ENCODE measurements at regions of chr4 and their contacts with region 1.

Region 1: DNA sequence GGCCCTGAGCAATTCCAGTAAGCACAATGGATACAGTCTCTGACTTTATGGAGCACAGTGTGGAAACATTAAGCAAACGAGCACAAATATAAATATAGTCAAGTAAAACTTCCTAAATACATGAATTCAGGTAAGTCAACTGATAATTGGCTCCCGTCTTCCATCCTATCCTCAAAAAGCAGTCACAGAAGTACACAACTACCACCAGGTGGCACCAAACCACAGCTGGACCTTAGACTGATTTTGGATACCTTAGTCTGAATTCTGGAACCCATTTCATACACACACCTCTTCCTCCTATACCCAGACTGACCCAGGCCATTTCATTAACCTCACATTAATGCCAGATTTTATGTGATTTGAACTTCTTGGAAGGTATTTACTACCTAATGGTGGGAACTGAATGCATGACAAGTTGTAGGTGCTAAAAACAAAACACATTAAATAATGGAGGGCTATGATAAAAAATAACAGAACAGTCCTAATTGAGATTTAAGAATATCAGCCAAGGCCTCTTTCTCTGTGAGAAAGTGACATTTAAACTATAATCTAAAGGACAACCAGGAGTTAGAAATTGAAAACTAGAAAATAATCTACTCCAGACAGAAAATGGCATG is 77.5 kb downstream of the ELF2 start:
- DNase-seq: peak; percentile 37 to 81 (median 71)
- ATAC-seq: peak; percentile 94
- H3K4me3 ChIP-seq: no peak overlapping the region
- H3K4me3 Mint-ChIP-seq: no peak overlapping the region
- H3K27ac ChIP-seq: no peak overlapping the region
- H3K27ac Mint-ChIP-seq: no peak overlapping the region
- H3K4me1 ChIP-seq: no peaks in the 10 kb centered on the region
- H3K4me1 Mint-ChIP-seq: peaks cover 0 to 6% (median 0%) of the 10 kb centered on the region in 7 donors
- H3K27me3 ChIP-seq: no peaks in the 10 kb centered on the region
- H3K27me3 Mint-ChIP-seq: no peaks in the 10 kb centered on the region

Region 2: DNA sequence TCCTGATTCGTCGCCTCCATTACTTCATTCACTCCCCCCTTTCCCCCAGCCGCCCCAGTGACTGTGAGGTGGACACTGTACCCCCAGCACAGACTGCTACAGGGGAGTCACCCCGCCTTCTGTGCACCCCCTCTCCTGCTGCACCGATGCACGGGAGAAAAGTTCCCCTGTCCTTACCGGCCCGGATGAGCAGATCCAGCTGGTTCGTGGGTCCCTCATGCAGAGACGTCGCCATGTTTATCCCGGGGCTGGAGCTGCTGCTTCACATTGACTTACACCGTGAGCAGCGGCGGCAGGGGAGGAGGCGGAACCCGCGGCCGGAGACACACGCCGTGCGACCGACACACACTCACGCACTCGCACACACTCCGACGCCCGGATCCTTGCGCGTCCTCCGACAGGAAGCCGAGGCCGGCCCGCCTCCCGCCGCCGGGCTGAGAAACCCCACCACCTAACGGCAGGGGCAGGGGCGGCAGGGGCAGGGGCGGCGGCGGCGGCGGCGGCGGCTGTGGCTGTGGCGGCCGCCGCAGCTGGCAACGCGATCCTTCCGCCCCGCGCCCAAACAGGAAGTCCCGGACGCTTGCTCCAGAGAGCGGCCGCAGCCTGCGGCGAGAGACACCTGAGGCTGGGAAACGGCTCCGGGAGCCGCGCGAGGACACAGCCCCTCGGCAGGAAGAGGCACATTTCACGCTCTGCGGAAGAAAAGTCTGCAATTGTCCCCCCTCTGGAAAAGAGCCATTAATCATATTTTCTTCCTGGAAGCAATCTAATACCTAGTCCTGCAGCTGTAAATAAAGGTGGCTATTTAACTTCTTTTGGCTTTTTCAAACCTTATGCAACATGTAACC is 15.3 kb before region 1 on chr4:
- CTCF ChIA-PET with region 1: interaction called, 5 read pairs
- POLR2A ChIA-PET with region 1: interaction called, 3 read pairs
- intact Hi-C with region 1: loop called in 1 of 2 experiments (anchors 1 kb)
- DNase-seq: peak; percentile 54 to 88 (median 84)
- ATAC-seq: peak; percentile 64
- H3K4me3 ChIP-seq: peak overlapping the region; percentile 99
- H3K4me3 Mint-ChIP-seq: peak overlapping the region; percentile 90 to 100 (median 92)
- H3K27ac ChIP-seq: peak overlapping the region; percentile 96
- H3K27ac Mint-ChIP-seq: peak overlapping the region; percentile 85 to 100 (median 96)
- H3K4me1 ChIP-seq: peaks cover 16 to 27% of the 10 kb centered on the region in 2 donors
- H3K4me1 Mint-ChIP-seq: peaks cover 16 to 49% (median 41%) of the 10 kb centered on the region in 7 donors
- H3K27me3 ChIP-seq: no peaks in the 10 kb centered on the region
- H3K27me3 Mint-ChIP-seq: no peaks in the 10 kb centered on the region

Region 3: DNA sequence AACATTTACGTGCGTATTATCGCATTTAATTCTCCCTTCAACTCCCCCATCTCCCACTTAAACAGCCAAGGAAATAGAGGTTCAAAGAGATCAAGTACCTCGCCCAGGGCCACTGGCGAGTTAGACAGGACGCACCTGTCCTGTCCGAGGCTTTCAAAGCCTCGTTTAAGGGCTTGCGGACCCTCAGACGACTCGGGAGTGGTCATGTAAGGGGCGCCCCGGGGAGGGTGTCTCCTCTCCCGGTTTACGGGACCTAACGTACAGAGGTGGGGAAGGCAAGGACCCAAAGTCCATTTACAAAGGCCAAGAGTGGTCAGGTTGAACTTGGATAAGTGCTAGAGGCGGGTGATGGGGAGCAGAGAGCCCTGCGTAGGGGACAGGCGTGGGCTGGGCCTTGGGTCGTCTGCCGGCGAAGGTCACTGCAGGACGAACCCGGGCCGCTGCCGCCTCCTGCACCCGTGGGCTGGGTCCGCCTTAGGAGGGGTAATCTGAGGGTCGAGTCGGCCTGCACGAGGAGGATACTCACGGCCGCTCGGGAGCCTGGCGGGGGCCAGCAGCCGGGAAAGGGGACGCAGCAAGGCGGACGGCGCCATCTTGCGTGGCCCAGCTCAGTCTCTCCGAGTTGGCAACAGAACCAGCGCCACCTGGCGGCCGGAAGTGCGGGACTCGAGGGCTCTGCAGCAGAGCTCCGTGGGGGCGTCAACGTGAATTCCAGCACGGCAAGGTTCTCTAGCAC is 195.9 kb after region 1 on chr4:
- CTCF ChIA-PET with region 1: interaction called, 42 read pairs
- POLR2A ChIA-PET with region 1: interaction called, 6 read pairs
- intact Hi-C with region 1: loop called (anchors 1 kb)
- DNase-seq: peak; percentile 90 to 99 (median 94)
- ATAC-seq: peak; percentile 99
- H3K4me3 ChIP-seq: peak overlapping the region; percentile 97
- H3K4me3 Mint-ChIP-seq: peak overlapping the region; percentile 86 to 100 (median 96)
- H3K27ac ChIP-seq: peak overlapping the region; percentile 94
- H3K27ac Mint-ChIP-seq: peak overlapping the region; percentile 93 to 100 (median 97)
- H3K4me1 ChIP-seq: peaks cover 13 to 28% of the 10 kb centered on the region in 2 donors
- H3K4me1 Mint-ChIP-seq: peaks cover 2 to 62% (median 40%) of the 10 kb centered on the region in 7 donors
- H3K27me3 ChIP-seq: no peaks in the 10 kb centered on the region
- H3K27me3 Mint-ChIP-seq: no peaks in the 10 kb centered on the region

Region 4: DNA sequence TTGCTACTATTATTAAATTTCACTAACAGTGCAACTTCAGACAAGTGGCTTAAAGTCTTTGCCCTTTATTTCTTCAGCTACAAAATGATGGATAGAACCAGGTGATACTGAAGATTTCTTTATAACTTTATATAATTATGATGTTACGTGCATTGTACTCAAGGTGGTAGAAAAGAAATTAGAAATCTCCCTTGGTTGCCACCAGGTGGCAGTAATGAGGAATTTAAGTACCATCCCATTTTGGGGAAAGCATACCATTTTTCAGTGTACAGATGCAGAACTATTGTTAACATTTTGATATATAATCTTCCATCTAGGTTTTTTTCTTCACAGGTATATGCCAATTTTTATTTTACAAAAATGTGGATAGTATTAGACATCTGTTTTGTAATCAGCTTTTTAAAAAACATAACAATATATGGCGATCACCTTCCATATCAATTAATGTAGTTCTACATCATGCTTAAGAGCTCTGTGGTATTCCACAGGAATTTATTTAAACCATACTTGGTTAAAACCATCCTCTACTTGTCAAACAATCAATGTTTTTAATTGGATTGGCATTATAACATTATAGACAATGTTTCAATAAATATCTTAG is 316.7 kb after region 1 on chr4:
- CTCF ChIA-PET with region 1: no interaction called
- POLR2A ChIA-PET with region 1: no interaction called
- intact Hi-C with region 1: loop called in 1 of 2 experiments (anchors 1 kb)
- DNase-seq: peak in 6 of 9 donors; percentile 5 to 46 (median 43)
- ATAC-seq: peak; percentile 72
- H3K4me3 ChIP-seq: no peak overlapping the region
- H3K4me3 Mint-ChIP-seq: no peak overlapping the region
- H3K27ac ChIP-seq: no peak overlapping the region
- H3K27ac Mint-ChIP-seq: no peak overlapping the region
- H3K4me1 ChIP-seq: no peaks in the 10 kb centered on the region
- H3K4me1 Mint-ChIP-seq: peaks cover 0 to 19% (median 12%) of the 10 kb centered on the region in 7 donors
- H3K27me3 ChIP-seq: no peaks in the 10 kb centered on the region
- H3K27me3 Mint-ChIP-seq: no peaks in the 10 kb centered on the region

Region 5: DNA sequence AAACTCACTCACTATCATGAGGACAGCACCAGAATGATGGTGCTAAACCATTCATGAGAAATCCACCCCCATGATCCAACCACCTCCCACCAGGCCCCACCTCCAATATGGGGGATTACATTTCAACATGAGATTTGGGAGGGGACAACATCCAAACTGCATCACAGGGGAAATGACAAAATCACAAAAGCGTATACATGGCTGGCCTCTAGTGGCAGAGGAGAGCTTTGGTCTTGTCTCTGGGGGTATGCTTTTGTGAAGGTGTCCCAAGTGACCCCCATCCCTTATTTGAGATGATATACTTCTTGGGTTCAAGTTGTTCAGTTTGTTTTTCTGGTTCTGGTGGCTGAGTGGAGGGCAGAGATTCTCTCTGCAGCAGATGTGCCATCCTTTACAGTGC is 465.0 kb after region 1 on chr4:
- CTCF ChIA-PET with region 1: interaction called, 3 read pairs
- POLR2A ChIA-PET with region 1: no interaction called
- intact Hi-C with region 1: loop called in 1 of 2 experiments (anchors 1 kb)
- DNase-seq: peak in 1 of 9 donors; percentile 15
- ATAC-seq: no peak
- H3K4me3 ChIP-seq: no peak overlapping the region
- H3K4me3 Mint-ChIP-seq: no peak overlapping the region
- H3K27ac ChIP-seq: no peak overlapping the region
- H3K27ac Mint-ChIP-seq: no peak overlapping the region
- H3K4me1 ChIP-seq: peaks cover 9% of the 10 kb centered on the region in 2 donors
- H3K4me1 Mint-ChIP-seq: peaks cover 10 to 17% (median 13%) of the 10 kb centered on the region in 7 donors
- H3K27me3 ChIP-seq: no peaks in the 10 kb centered on the region
- H3K27me3 Mint-ChIP-seq: peaks cover 0 to 4% (median 0%) of the 10 kb centered on the region in 5 donors